ENCODE measurements at regions of chr1 and their contacts with region 1.

Region 1: DNA sequence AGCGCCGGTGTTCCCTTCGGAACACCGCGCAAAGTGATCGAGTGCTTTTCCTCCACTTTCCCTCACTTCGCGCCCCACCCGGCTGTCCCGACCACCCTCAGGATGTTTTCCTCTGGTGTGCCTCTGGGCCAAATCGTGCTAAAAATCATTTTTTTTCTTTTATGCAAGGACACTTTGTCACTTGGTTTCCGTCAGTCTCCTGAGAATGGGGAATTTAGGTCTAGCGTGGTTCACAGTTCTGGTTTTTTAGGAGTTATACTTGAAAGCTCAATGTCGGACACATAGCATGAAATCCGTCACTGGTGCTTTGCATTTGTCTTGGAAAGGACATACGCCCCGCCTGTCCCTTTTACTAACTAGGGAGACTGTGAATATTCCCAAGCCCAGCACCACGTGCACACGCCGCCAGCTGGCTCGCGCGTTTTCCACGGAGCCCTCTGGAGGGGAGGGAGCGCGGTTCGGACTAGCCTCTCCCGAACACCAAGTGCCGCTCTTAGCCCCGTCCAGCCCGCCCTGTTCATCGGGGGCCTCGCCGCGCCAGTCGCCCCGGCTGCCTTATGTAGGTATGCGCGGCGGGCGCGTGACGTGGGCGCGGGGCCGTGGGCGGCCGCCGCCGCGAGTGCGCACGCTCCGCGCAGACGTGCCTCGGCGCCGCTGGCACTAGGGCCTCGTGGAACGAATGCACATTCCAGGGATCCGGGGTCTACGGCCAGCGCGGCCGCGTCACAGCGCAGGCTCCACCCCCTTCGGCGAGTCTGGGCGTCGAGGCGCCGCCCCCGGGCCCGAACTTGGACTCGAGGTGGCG is 572 bp upstream of the IRF2BP2 start:
- DNase-seq: peak; percentile 89 to 93 (median 91)
- ATAC-seq: peak; percentile 67
- H3K4me3 ChIP-seq: peak overlapping the region; percentile 89
- H3K4me3 Mint-ChIP-seq: peak overlapping the region; percentile 80 to 98 (median 90)
- H3K27ac ChIP-seq: peak overlapping the region; percentile 97
- H3K27ac Mint-ChIP-seq: peak overlapping the region; percentile 97 to 100 (median 99)
- H3K4me1 ChIP-seq: peaks cover 34 to 43% of the 10 kb centered on the region in 2 donors
- H3K4me1 Mint-ChIP-seq: peaks cover 45 to 62% (median 54%) of the 10 kb centered on the region in 7 donors
- H3K27me3 ChIP-seq: no peaks in the 10 kb centered on the region
- H3K27me3 Mint-ChIP-seq: peaks cover 0 to 6% (median 0%) of the 10 kb centered on the region in 5 donors

Region 2: GRCh38 chr1:234373064-234373958 is 237.2 kb before region 1 on chr1 and contains the start of gene COA6:
- CTCF ChIA-PET with region 1: no interaction called
- POLR2A ChIA-PET with region 1: interaction called, 5 read pairs
- intact Hi-C with region 1: loop called (anchors 1 kb)
- DNase-seq: peak; percentile 76 to 92 (median 90)
- ATAC-seq: peak; percentile 91
- H3K4me3 ChIP-seq: peak within 1 kb of the TSS; percentile 73
- H3K4me3 Mint-ChIP-seq: peak within 1 kb of the TSS; percentile 93 to 100 (median 97)
- H3K27ac ChIP-seq: peak within 1 kb of the TSS; percentile 95
- H3K27ac Mint-ChIP-seq: peak within 1 kb of the TSS; percentile 97 to 100 (median 99)
- H3K4me1 ChIP-seq: peaks cover 12 to 16% of the 10 kb centered on the region in 2 donors
- H3K4me1 Mint-ChIP-seq: peaks cover 30 to 66% (median 63%) of the 10 kb centered on the region in 7 donors
- H3K27me3 ChIP-seq: no peaks in the 10 kb centered on the region
- H3K27me3 Mint-ChIP-seq: no peaks in the 10 kb centered on the region
- total RNA-seq, gene COA6: 9.5 to 47.3 (median 18.5) TPM

Region 3: GRCh38 chr1:234458352-234459017 is 152.1 kb before region 1 on chr1:
- CTCF ChIA-PET with region 1: no interaction called
- POLR2A ChIA-PET with region 1: no interaction called
- intact Hi-C with region 1: no loop called
- DNase-seq: no peak
- ATAC-seq: no peak
- H3K4me3 ChIP-seq: no peak overlapping the region
- H3K4me3 Mint-ChIP-seq: no peak overlapping the region
- H3K27ac ChIP-seq: no peak overlapping the region
- H3K27ac Mint-ChIP-seq: no peak overlapping the region
- H3K4me1 ChIP-seq: no peaks in the 10 kb centered on the region
- H3K4me1 Mint-ChIP-seq: no peaks in the 10 kb centered on the region
- H3K27me3 ChIP-seq: no peaks in the 10 kb centered on the region
- H3K27me3 Mint-ChIP-seq: no peaks in the 10 kb centered on the region

Region 4: GRCh38 chr1:234599617-234600417 is 10.7 kb before region 1 on chr1:
- CTCF ChIA-PET with region 1: interaction called, 35 read pairs
- POLR2A ChIA-PET with region 1: interaction called, 260 read pairs
- intact Hi-C with region 1: loop called (anchors 1 kb)
- DNase-seq: peak; percentile 52 to 88 (median 62)
- ATAC-seq: peak; percentile 74
- H3K4me3 ChIP-seq: peak overlapping the region; percentile 61
- H3K4me3 Mint-ChIP-seq: peak overlapping the region; percentile 75 to 97 (median 89)
- H3K27ac ChIP-seq: peak overlapping the region; percentile 96
- H3K27ac Mint-ChIP-seq: peak overlapping the region; percentile 87 to 99 (median 95)
- H3K4me1 ChIP-seq: peaks cover 51 to 54% of the 10 kb centered on the region in 2 donors
- H3K4me1 Mint-ChIP-seq: peaks cover 24 to 68% (median 56%) of the 10 kb centered on the region in 7 donors
- H3K27me3 ChIP-seq: no peaks in the 10 kb centered on the region
- H3K27me3 Mint-ChIP-seq: no peaks in the 10 kb centered on the region

Region 5: GRCh38 chr1:234722904-234723720 is 112.6 kb after region 1 on chr1:
- CTCF ChIA-PET with region 1: interaction called, 9 read pairs
- POLR2A ChIA-PET with region 1: interaction called, 188 read pairs
- intact Hi-C with region 1: loop called (anchors 1 kb)
- DNase-seq: peak in 2 of 9 donors; percentile 51 to 68
- ATAC-seq: peak; percentile 12
- H3K4me3 ChIP-seq: peak overlapping the region; percentile 52
- H3K4me3 Mint-ChIP-seq: peak overlapping the region; percentile 51 to 85 (median 82)
- H3K27ac ChIP-seq: peak overlapping the region; percentile 95
- H3K27ac Mint-ChIP-seq: peak overlapping the region; percentile 87 to 99 (median 98)
- H3K4me1 ChIP-seq: peaks cover 39 to 46% of the 10 kb centered on the region in 2 donors
- H3K4me1 Mint-ChIP-seq: peaks cover 46 to 95% (median 84%) of the 10 kb centered on the region in 7 donors
- H3K27me3 ChIP-seq: no peaks in the 10 kb centered on the region
- H3K27me3 Mint-ChIP-seq: no peaks in the 10 kb centered on the region

Region 6: DNA sequence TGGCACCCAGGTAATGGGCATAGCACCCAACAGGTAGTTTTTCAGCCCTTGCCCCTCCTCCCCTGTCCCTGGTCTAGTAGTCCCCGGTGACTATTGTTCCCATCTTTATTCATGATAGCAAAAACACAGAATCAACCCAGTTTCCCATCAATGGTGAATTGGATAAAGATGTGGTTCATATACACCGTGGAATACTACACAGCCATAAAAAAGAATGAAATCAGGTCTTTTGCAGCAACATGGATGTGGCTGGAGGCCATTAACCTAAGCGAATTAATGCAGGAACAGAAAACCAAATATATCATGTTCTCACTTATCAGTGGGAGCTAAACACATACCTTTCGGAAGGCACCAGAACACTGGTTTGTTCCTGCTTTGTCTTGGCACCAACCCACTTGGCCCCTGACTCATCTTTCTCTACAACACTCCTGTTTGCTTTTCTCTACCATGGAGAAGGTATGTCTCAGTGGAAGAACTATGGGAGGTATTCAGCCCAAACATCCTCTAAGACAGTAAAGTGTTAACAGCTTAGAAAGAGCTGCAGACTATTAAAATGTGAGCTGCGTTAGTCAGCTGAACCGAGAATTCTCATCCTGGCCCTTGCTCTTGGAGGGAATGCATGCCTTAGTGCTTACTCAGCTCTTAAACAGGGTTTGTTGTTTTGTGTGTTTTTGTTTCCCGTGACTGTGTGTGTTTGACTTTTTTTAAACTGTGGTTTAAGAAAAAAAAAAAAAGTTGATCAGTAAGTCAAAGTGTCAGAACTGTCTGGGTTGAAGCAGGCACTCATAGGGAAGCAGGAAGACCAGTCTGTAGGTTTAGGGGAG is 315.1 kb after region 1 on chr1:
- CTCF ChIA-PET with region 1: no interaction called
- POLR2A ChIA-PET with region 1: interaction called, 10 read pairs
- intact Hi-C with region 1: loop called in 1 of 2 experiments (anchors 2 kb)
- DNase-seq: peak in 3 of 9 donors; percentile 25 to 35 (median 30)
- ATAC-seq: peak; percentile 50
- H3K4me3 ChIP-seq: no peak overlapping the region
- H3K4me3 Mint-ChIP-seq: peak overlapping the region; percentile 45 to 80 (median 66)
- H3K27ac ChIP-seq: no peak overlapping the region
- H3K27ac Mint-ChIP-seq: peak overlapping the region; percentile 80 to 93 (median 83)
- H3K4me1 ChIP-seq: peaks cover 26 to 47% of the 10 kb centered on the region in 2 donors
- H3K4me1 Mint-ChIP-seq: peaks cover 37 to 60% (median 55%) of the 10 kb centered on the region in 7 donors
- H3K27me3 ChIP-seq: no peaks in the 10 kb centered on the region
- H3K27me3 Mint-ChIP-seq: no peaks in the 10 kb centered on the region

Region 7: GRCh38 chr1:235160957-235161684 is 550.6 kb after region 1 on chr1 and contains the start of gene RBM34:
- CTCF ChIA-PET with region 1: no interaction called
- POLR2A ChIA-PET with region 1: interaction called, 5 read pairs
- intact Hi-C with region 1: loop called in 1 of 2 experiments (anchors 2 kb)
- DNase-seq: peak; percentile 87 to 95 (median 91)
- ATAC-seq: peak; percentile 96
- H3K4me3 ChIP-seq: peak within 1 kb of the TSS; percentile 92
- H3K4me3 Mint-ChIP-seq: peak within 1 kb of the TSS in 8 of 10 donors; percentile 96 to 100 (median 98)
- H3K27ac ChIP-seq: peak within 1 kb of the TSS; percentile 86
- H3K27ac Mint-ChIP-seq: peak within 1 kb of the TSS; percentile 97 to 100 (median 99)
- H3K4me1 ChIP-seq: peaks cover 30 to 33% of the 10 kb centered on the region in 2 donors
- H3K4me1 Mint-ChIP-seq: peaks cover 8 to 30% (median 17%) of the 10 kb centered on the region in 7 donors
- H3K27me3 ChIP-seq: no peaks in the 10 kb centered on the region
- H3K27me3 Mint-ChIP-seq: no peaks in the 10 kb centered on the region
- total RNA-seq, gene RBM34: 105 to 171 (median 137) TPM

Measured in naive thymus-derived CD4-positive, alpha-beta T cell (primary cell).